ENCODE measurements at regions of chr11 and their contacts with region 1.

Region 1: GRCh38 chr11:58905721-58906477 is 33.4 kb upstream of the GLYATL1 start:
- DNase-seq: peak; percentile 91
- ATAC-seq: peak; percentile 94
- H3K4me3 ChIP-seq: peak overlapping the region; percentile 75
- H3K27ac ChIP-seq: no peak overlapping the region; the same call in 1 of the 2 replicates
- H3K4me1 ChIP-seq: no peaks in the 10 kb centered on the region; the same call in 1 of the 2 replicates
- H3K27me3 ChIP-seq: no peaks in the 10 kb centered on the region
- CTCF ChIP-seq: peak; percentile 49
- POLR2A ChIP-seq: no peak
- RAD21 ChIP-seq: no peak

Region 2: DNA sequence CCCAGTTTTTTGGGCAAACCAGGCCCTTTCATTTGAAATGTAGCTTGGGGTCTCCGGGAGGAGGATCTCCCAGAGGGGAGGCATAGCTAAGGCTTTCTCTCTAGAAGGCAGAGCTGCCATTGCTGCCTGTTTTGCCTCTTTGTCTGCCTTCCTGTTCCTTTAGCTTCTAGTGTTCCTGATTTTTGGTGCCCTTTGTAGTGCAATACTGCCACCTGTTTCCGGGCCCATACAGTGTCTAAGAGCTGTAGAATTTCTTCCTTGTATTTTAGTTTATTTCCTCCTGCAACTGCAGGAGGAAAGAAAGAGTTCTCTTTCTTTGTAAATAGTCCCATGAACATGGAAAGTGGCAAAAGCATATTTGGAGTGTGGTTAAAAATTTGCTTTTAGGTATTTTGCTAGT is 14.1 kb after region 1 on chr11:
- CTCF ChIA-PET with region 1: interaction called, 19 read pairs
- POLR2A ChIA-PET with region 1: interaction called, 3 read pairs
- dilution Hi-C with region 1: no loop called
- in situ Hi-C with region 1: no loop called
- intact Hi-C with region 1: no loop called
- DNase-seq: no peak
- ATAC-seq: no peak
- H3K4me3 ChIP-seq: no peak overlapping the region
- H3K27ac ChIP-seq: no peak overlapping the region
- H3K4me1 ChIP-seq: no peaks in the 10 kb centered on the region; the same call in 1 of the 2 replicates
- H3K27me3 ChIP-seq: no peaks in the 10 kb centered on the region; the same call in 1 of the 2 replicates
- CTCF ChIP-seq: no peak
- POLR2A ChIP-seq: no peak
- RAD21 ChIP-seq: no peak

Region 3: DNA sequence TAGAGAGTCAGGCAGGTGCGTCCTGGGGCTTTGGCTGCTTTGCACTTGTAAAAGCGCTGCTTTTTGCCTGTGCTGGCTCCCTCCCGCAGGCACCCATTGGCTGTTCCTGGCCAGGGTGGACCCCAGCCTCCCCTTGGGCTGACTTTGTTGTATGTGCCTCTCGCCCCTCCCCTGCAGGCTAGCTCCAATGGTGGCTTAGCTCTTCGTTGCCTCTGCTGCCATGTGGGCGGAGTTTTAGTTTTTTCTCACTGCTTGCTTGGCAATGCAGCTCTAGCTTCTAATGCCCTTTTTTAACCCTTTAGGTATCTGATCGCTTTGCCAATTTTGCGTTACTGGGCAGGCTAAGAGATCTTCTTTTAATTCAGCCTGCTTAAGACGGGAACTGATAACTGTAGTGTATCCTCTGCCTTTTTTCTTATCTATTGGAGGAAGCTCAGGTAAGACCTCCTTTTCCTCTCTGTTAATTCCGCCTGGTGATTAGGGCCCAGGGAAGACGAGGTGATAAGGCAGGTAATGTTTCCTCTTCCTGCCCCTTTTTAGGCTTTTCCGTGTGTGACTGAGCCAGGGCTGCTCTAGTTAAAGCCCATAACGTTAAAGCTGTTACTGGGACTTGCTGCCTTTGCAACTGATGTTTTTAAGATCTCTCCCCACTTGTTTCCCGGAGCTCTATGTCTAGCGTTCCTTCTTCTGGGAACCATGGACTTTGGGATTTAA is 21.7 kb after region 1 on chr11:
- CTCF ChIA-PET with region 1: interaction called, 4 read pairs
- POLR2A ChIA-PET with region 1: no interaction called
- dilution Hi-C with region 1: no loop called
- in situ Hi-C with region 1: no loop called
- intact Hi-C with region 1: loop called (anchors 2 kb)
- DNase-seq: peak; percentile 29
- ATAC-seq: peak; percentile 80
- H3K4me3 ChIP-seq: no peak overlapping the region
- H3K27ac ChIP-seq: no peak overlapping the region
- H3K4me1 ChIP-seq: peaks cover 3% of the 10 kb centered on the region; the same call in 1 of the 2 replicates
- H3K27me3 ChIP-seq: no peaks in the 10 kb centered on the region
- CTCF ChIP-seq: no peak
- POLR2A ChIP-seq: no peak
- RAD21 ChIP-seq: no peak

Region 4: DNA sequence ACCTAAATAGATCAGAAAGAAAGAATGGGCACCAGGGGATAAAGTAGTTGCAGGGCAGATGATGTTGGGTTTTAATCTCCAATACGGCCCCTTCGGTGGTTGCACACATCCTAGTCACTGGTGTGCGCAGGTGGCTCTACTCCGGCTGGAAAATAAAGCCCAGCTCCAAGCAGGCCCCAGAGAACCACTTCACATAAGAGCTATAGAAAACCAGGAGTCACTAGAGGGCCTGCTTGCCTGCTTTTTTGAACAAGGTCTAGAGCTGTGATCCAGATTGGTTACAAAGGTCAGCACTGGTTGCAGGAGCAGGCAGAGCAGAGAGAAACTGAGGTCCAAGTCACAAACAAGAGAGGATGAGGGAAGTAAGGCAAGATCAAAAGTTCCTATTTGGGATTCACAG is 1752.0 kb after region 1 on chr11:
- CTCF ChIA-PET with region 1: no interaction called
- POLR2A ChIA-PET with region 1: no interaction called
- dilution Hi-C with region 1: no loop called
- in situ Hi-C with region 1: no loop called
- intact Hi-C with region 1: no loop called
- DNase-seq: no peak
- ATAC-seq: no peak
- H3K4me3 ChIP-seq: no peak overlapping the region
- H3K27ac ChIP-seq: no peak overlapping the region
- H3K4me1 ChIP-seq: no peaks in the 10 kb centered on the region
- H3K27me3 ChIP-seq: no peaks in the 10 kb centered on the region
- CTCF ChIP-seq: no peak
- POLR2A ChIP-seq: no peak
- RAD21 ChIP-seq: no peak

Measured in IMR-90 (cell line).